Vagina (tissue), 2 donors: ENCODE measurements at regions of chr2 and their contacts with region 1.

Region 1: GRCh38 chr2:182426082-182426917 is 536 bp downstream of the PDE1A start:
- DNase-seq: no peak
- H3K4me3 ChIP-seq: peak overlapping the region; percentile 22 to 40
- H3K27ac ChIP-seq: peak overlapping the region; percentile 62
- H3K4me1 ChIP-seq: peaks cover 14% of the 10 kb centered on the region
- H3K27me3 ChIP-seq: no peaks in the 10 kb centered on the region
- CTCF ChIP-seq: no peak
- POLR2A ChIP-seq: no peak

Region 2: DNA sequence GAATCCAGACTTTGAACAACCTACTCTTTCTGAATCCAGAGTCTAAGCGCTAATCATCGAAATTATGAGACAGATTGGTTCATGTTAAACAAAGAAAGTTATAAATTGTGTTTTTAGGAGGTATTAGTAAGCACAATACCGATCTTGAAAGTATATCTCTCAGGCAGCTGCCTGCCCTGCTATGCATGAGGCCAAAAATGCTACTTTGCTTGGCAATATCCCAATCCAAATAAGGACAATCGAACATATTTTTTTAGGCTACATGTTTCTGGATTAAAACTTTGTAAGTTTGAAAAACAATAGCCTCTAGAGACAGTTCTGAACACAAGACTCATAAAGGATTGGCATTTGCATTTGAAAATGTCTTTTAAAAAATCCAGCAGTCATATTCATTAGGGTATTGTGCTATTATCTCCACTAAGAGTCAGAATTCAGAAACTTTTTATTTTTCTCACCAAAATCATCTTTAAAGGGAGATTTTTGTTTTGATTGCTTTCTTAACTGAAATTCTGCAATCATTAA is 166.6 kb before region 1 on chr2:
- intact Hi-C with region 1: no loop called
- DNase-seq: no peak
- H3K4me3 ChIP-seq: no peak overlapping the region
- H3K27ac ChIP-seq: no peak overlapping the region
- H3K4me1 ChIP-seq: no peaks in the 10 kb centered on the region
- H3K27me3 ChIP-seq: no peaks in the 10 kb centered on the region
- CTCF ChIP-seq: no peak
- POLR2A ChIP-seq: no peak

Region 3: GRCh38 chr2:182372661-182373060 is 53.6 kb before region 1 on chr2:
- intact Hi-C with region 1: loop called (anchors 10 kb)
- DNase-seq: no peak
- H3K4me3 ChIP-seq: no peak overlapping the region
- H3K27ac ChIP-seq: peak overlapping the region; percentile 72
- H3K4me1 ChIP-seq: peaks cover 47% of the 10 kb centered on the region
- H3K27me3 ChIP-seq: no peaks in the 10 kb centered on the region
- CTCF ChIP-seq: no peak
- POLR2A ChIP-seq: no peak

Region 4: DNA sequence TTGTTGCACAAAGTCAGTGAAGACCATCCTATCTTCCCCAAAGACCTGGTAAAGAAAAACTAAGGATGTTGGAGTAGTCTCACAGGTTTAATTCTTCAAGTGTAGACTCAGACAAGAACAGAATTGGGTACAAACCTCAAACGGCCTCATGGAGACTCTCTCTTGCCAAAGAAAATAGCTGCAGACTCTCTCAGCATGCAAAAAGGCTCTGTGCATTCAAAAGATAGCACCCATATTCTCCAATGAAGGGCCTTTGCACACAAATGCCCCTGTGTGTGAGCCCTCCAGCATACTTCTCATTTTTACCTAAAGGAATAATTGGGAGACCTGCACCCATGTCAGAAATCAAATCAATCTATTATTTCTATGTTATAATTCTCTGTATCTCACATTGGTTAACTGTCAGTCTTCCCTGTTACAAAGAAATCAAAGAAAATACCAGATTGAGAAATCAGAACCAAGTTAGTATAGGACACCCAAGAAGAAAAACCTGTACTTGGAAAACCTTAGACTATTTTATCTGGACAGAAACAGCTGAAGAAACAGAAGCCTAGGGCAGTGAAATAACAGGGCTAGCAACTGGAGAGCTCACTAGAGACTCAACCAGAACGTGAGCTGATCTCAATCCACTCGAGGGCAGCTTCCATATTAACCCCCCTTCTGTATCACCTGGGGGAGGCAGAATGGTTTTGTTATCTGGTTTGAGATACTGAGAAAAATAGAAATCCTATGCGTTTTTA is 155.1 kb after region 1 on chr2:
- intact Hi-C with region 1: no loop called
- DNase-seq: no peak
- H3K4me3 ChIP-seq: no peak overlapping the region
- H3K27ac ChIP-seq: no peak overlapping the region
- H3K4me1 ChIP-seq: no peaks in the 10 kb centered on the region
- H3K27me3 ChIP-seq: no peaks in the 10 kb centered on the region
- CTCF ChIP-seq: no peak
- POLR2A ChIP-seq: no peak